IMR-90 (cell line): ENCODE measurements at regions of chr20 and their contacts with region 1.

Region 1: DNA sequence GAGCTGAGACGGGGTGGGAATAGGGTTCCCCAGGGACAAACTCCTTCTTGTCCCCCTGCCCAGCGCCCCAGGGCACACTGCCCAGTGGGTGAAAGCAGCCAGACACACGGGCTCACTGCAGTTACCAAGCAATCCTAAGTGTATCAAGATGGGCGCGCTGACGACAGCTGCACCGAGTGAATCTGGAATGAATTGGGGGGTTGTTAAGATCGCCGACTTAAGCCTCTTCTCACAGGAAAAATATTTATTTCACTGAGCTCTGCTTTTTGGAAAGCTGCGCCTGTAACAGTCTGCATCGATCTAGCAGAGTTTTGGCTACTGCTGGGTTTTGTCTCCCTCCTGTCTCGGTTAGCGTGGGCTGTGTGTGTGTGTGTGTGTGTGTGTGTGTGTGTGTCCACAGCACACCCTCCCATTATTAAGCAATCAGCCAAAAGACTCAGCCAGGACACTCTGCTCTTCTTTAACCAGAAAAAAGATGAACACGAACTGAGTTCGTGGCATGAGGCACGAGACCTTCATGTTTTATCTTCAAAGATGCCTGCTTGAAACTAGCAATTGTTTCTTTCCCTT is 35.9 kb downstream of the RIPOR3 start:
- DNase-seq: peak; percentile 88
- ATAC-seq: peak; percentile 79
- H3K4me3 ChIP-seq: no peak overlapping the region
- H3K27ac ChIP-seq: peak overlapping the region; percentile 94
- H3K4me1 ChIP-seq: peaks cover 27% of the 10 kb centered on the region
- H3K27me3 ChIP-seq: no peaks in the 10 kb centered on the region
- CTCF ChIP-seq: no peak
- POLR2A ChIP-seq: no peak
- RAD21 ChIP-seq: 0 out of 2 replicates have a peak, but pooled peaks have one; percentile 3

Region 2: DNA sequence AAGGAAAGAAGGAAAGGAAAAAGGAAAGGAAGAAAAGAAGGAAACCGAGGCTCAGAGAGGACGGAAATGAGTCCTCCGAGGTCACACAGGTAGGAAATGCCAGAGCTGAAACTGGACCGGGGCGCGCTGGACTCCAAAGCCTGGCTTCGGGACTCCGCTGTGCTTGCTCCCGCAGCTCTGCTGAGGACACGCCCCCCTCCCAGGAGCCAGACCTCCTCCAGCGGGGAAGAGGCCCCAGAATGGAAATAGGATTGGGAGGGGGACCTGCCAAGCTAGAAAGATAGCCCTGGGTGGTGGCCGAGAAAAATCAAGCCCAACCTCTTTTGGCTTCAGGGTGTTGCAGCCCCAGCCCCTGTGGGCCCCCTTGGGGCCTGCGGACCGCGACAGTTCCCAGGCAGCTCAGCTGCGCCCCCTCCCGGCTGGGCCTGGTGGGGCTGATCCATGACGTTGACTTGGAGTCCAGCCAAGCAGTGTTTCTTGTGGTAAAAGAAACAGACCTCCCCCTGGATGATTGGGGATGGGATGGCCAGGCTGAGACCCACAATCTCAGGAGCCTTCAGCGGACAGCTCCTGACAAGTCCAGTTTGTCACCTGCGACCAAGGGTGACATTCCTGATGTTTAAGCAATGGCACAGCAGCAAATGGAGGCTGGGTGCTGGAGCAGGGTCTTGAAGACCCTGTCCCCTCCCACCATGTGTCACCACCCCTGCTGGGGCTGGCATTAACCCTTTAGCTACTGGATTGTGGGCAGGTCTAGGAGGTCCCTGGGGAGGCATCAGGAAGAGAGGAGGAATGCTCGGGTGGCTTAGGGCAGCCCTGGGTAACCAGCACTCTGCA is 19.5 kb before region 1 on chr20:
- CTCF ChIA-PET with region 1: interaction called, 10 read pairs
- POLR2A ChIA-PET with region 1: interaction called, 3 read pairs
- dilution Hi-C with region 1: no loop called
- in situ Hi-C with region 1: no loop called
- intact Hi-C with region 1: no loop called
- DNase-seq: peak; percentile 49
- ATAC-seq: peak; percentile 57
- H3K4me3 ChIP-seq: peak overlapping the region; percentile 3; the same call in 1 of the 2 replicates
- H3K27ac ChIP-seq: peak overlapping the region; percentile 100
- H3K4me1 ChIP-seq: peaks cover 25% of the 10 kb centered on the region
- H3K27me3 ChIP-seq: no peaks in the 10 kb centered on the region
- CTCF ChIP-seq: peak; percentile 87
- POLR2A ChIP-seq: no peak
- RAD21 ChIP-seq: peak; percentile 57

Region 3: DNA sequence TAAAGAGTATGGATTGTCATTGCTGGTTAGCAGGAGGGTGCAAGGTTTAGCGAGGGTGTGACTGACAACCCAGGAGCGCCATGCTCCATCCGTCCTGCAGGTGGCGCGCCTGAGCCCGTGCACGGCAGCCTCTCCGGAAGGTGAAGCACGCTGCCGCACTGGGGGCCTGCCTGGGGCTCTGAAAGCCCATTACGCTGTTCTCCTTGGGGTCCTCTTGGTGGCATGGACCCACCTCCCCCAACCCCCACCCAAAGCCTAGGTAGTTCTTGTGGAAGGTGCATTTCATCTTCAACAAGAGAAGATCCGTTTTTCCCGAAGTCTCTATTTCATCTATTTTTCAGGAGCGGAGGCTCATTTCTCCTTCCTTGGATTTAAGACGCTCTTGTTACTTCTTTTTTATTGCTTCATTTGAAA is 564.9 kb after region 1 on chr20:
- CTCF ChIA-PET with region 1: no interaction called
- POLR2A ChIA-PET with region 1: no interaction called
- dilution Hi-C with region 1: no loop called
- in situ Hi-C with region 1: no loop called
- intact Hi-C with region 1: no loop called
- DNase-seq: no peak
- ATAC-seq: peak; percentile 65
- H3K4me3 ChIP-seq: no peak overlapping the region
- H3K27ac ChIP-seq: no peak overlapping the region
- H3K4me1 ChIP-seq: no peaks in the 10 kb centered on the region
- H3K27me3 ChIP-seq: peaks cover 22% of the 10 kb centered on the region
- CTCF ChIP-seq: peak; percentile 68
- POLR2A ChIP-seq: no peak
- RAD21 ChIP-seq: peak; percentile 58